PC-9 (cell line): ENCODE measurements at regions of chr16 and their contacts with region 1.

Region 1: DNA sequence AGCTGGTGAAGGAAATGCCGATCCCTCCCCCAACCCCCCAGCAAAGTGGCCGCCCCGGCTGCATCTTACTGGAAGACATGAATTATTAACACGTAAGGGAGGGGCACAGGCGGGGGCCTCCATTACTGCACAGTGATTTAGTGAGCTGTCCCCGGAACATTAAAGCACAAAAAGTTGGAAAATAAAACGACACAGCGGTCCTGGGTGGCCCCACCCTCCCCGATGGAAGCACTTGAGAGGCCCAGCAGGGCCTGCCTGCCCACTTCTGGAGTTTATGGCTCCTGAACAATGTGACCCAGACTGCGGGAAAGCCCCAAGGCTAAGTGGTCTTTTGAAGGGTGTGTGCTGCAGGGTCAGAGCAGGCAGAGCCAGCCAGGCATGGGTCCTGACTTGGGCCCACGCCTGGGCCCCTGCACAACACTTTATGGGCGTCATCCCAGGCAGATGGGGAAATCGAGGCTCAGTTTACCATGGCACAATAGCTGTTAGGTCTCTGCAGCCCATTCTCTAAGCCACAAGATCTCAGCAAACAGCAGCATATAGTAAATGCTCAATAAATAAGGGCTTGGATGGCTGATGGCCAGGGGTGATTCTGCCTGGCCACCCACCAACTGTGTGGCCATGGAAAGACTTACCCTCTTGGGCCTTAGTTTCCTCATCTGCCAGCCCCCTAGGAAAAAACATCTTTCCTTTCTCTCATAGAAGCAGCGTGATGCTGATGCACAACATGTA is 22.8 kb downstream of the CCDC102A start:
- DNase-seq: no peak
- H3K4me3 ChIP-seq: no peak overlapping the region
- H3K27ac ChIP-seq: no peak overlapping the region
- H3K4me1 ChIP-seq: no peaks in the 10 kb centered on the region
- H3K27me3 ChIP-seq: 0 out of 2 replicates have a peak, but pooled peaks cover 3% of the 10 kb centered on the region
- CTCF ChIP-seq: no peak

Region 2: GRCh38 chr16:57434003-57434402 is 79.5 kb before region 1 on chr16:
- CTCF ChIA-PET with region 1: no interaction called
- POLR2A ChIA-PET with region 1: interaction called, 16 read pairs
- intact Hi-C with region 1: no loop called
- DNase-seq: no peak
- H3K4me3 ChIP-seq: no peak overlapping the region
- H3K27ac ChIP-seq: no peak overlapping the region
- H3K4me1 ChIP-seq: no peaks in the 10 kb centered on the region
- H3K27me3 ChIP-seq: no peaks in the 10 kb centered on the region
- CTCF ChIP-seq: no peak

Region 3: DNA sequence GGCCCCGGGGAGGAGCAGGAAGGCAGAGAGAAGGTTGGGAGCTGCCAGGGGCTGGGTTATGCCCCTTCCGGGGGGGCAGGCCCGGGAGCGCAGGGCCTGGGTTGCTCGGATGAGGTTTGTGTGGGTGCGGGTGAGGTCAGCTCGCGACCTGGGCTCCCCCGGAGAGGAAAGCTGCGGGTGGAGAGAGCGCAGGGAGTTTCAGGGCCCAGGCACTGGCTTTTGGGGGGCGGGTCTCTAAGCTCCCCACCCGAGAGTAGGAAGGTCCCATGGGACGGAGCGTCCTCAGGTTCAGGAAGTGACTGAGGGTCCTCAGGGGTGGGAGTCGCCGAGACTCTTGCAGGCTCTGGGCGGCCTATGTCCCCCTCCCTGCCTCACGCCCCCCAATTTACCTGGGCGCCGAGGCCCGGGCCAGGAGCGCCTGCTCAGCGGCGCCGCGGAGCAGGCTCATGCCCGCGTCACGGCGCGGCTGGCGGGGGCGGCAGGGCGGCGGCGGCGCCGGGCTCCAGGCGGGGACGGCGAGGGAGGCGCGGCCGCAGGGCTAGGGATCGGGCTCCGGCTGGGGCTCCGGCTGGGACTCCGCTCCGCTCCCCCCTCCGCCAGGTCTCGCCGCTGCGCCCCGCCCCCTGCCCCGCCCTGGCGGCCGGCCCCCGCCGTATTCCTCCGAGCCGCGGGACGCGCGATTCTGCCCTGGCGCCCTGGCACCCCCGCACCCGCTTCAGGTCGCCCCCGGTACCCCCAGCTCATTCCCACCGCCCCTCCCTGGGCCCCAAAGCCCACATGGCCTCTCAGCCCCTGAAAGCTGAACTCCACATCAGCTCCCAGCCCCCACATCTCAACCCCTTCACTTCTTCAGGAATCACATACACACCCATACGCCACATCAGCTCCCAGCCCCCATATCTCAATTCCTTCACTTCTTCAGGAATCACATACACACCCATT is 27.4 kb before region 1 on chr16 and contains the start of gene DOK4:
- CTCF ChIA-PET with region 1: interaction called, 5 read pairs
- POLR2A ChIA-PET with region 1: interaction called, 12 read pairs
- intact Hi-C with region 1: no loop called
- DNase-seq: peak in 1 of 2 experiments; percentile 77
- H3K4me3 ChIP-seq: peak within 1 kb of the TSS; percentile 75
- H3K27ac ChIP-seq: no peak within 1 kb of the TSS
- H3K4me1 ChIP-seq: no peaks in the 10 kb centered on the region
- H3K27me3 ChIP-seq: no peaks in the 10 kb centered on the region
- CTCF ChIP-seq: no peak
- total RNA-seq, gene DOK4: 27.4 and 38.7 TPM in 2 replicates